ENCODE measurements at regions of chr7 and their contacts with region 1.

Region 1: GRCh38 chr7:87416682-87417587 is 58.5 kb downstream of the ABCB4 start:
- DNase-seq: peak in 1 of 3 donors; percentile 93
- ATAC-seq: peak; percentile 75
- H3K4me3 ChIP-seq: no peak overlapping the region
- H3K4me1 ChIP-seq: no peaks in the 10 kb centered on the region
- CTCF ChIP-seq: peak; percentile 17

Region 2: DNA sequence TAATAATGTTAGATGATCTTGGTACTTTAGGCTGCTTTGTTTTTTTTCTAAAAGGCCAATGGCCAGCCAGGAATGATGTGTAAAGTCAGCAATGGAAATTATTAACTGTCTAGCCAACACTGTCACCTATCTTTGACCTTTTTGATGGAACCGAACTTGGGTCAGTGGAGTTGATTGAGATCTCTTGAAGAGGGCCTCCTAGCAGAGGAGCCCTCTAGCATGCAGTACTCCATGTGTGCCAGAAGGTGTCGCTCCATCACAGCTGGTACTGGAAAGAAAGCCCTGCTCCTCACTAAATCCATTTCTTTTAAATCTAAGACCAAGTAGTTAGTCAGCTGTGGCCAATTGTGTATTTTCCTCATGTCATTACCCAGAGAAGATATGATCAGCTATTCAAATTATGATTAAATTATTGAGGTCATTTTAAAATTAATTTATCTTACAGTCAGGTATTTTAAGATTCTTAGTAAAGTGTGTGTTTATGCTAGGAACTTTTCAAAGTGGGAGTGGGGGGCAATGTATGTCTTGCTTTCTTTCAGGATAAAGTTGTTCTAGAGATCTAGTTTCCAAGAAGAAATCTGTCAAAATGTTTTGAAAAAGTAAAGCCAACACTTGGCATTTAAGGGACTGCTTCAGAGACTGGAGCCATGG is 104.6 kb before region 1 on chr7:
- intact Hi-C with region 1: loop called (anchors 1 to 5 kb)
- DNase-seq: peak in 2 of 3 donors; percentile 54 to 59
- ATAC-seq: peak; percentile 95
- H3K4me3 ChIP-seq: no peak overlapping the region
- H3K4me1 ChIP-seq: no peaks in the 10 kb centered on the region
- CTCF ChIP-seq: peak; percentile 93